Breast epithelium (tissue), 4 donors: ENCODE measurements at regions of chr2 and their contacts with region 1.

Region 1: GRCh38 chr2:160406591-160407392 is 86.8 kb downstream of the RBMS1 start:
- DNase-seq: peak in 1 of 2 donors; percentile 51
- H3K4me3 ChIP-seq: peak overlapping the region; percentile 90 to 96 (median 94)
- H3K27ac ChIP-seq: peak overlapping the region; percentile 95 to 98
- H3K4me1 ChIP-seq: peaks cover 0 to 8% of the 10 kb centered on the region in 2 donors
- H3K27me3 ChIP-seq: no peaks in the 10 kb centered on the region
- CTCF ChIP-seq: no peak
- POLR2A ChIP-seq: peak; percentile 22

Region 2: DNA sequence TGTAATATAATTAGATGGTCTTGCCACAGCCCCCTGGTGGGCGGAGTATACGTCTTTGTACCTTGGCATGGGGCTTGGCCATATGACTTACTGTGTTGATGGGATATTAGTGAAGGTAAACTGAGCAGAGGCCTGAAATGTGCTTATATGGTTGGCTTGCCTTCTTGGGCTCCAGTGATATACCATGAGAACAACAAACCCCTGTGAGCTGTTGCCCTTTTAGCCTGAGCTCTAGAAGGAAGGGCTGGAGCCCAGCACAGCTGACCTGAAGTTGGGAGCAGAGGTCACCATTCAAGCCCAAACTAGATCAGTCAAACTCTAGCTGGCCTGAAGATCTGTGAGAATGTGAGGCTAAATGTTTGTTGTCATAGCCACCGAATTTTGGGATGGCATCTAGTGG is 533.5 kb before region 1 on chr2:
- intact Hi-C with region 1: no loop called
- DNase-seq: no peak
- H3K4me3 ChIP-seq: no peak overlapping the region
- H3K27ac ChIP-seq: no peak overlapping the region
- H3K4me1 ChIP-seq: no peaks in the 10 kb centered on the region
- H3K27me3 ChIP-seq: no peaks in the 10 kb centered on the region
- CTCF ChIP-seq: no peak
- POLR2A ChIP-seq: no peak

Region 3: GRCh38 chr2:161265874-161266273 is 859.1 kb after region 1 on chr2:
- intact Hi-C with region 1: loop called (anchors 5 kb)
- DNase-seq: no peak
- H3K4me3 ChIP-seq: no peak overlapping the region
- H3K27ac ChIP-seq: no peak overlapping the region
- H3K4me1 ChIP-seq: no peaks in the 10 kb centered on the region
- H3K27me3 ChIP-seq: no peaks in the 10 kb centered on the region
- CTCF ChIP-seq: no peak
- POLR2A ChIP-seq: no peak